GM10248 (cell line): ENCODE measurements at regions of chr10 and their contacts with region 1.

Region 1: DNA sequence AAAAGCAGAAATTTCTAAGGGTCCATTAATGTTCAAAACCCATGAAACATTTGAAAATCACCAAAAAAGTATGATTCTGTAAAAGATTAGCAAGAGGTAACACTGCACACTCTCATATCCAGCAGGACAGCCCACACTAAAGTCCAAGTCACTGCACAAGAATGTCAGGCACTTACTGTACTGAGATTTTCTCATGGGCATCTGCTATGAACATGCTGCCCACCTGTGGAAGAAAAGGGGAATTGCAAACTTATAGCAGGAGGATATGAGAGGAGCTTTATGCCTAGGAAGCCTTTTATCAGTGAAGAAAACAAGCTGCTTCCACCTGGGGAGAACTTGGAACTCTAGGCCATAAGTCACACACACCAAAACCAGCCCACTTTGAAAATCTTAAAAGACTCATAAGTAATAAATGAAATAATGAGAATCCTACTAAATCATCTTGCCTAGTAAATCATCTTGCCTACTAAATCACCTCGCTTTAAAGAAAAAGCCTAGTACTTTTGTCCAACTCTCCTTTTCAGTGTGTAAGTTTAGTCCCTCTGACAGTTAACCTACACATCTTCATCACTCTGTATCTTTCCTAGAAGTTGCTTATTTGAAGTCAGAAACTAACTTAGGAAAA is 46.1 kb downstream of the ARMH3 start:
- DNase-seq: peak; percentile 72
- CTCF ChIP-seq: peak; percentile 94

Region 2: DNA sequence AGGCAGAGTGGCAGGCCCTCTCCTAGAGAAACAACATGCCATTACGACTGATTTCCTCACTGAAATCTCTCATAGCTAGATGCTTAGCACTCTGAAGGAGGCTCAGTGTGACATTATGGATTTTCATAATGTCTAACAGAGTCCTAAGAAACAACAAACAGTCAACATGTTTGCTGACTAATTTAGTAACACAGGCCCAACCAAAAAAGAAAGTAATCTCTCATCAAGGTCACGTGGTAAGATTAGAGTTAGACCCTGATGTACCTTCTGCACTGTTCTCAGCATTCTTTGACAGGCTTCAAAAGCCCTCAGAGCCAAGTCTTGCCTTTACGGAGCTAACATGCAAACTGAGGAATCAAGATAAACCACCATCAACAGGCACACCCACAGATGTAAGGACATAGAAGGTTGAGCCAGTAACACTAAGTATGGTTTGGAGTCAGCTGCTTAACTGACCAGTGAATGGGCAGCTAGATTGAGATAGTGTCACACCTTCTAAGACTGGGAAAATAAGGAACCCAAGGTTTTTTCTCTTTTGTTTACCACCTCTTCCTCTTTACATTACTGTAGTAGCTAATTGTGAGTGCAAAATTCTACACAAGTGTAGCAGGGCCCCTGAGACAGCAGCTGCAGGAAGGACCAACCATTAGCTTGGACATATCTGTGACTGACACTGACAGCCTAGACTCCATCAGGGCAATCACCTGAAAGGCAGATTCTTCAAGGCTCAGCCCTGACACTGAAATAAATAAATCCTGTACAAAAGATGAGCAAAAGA is 151.0 kb before region 1 on chr10:
- CTCF ChIA-PET with region 1: interaction called, 52 read pairs
- POLR2A ChIA-PET with region 1: no interaction called
- DNase-seq: peak; percentile 60
- CTCF ChIP-seq: no peak

Region 3: GRCh38 chr10:101903827-101904550 is 105.9 kb before region 1 on chr10:
- CTCF ChIA-PET with region 1: interaction called, 249 read pairs
- POLR2A ChIA-PET with region 1: no interaction called
- DNase-seq: peak; percentile 67
- CTCF ChIP-seq: no peak

Region 4: GRCh38 chr10:101959349-101959916 is 50.5 kb before region 1 on chr10:
- CTCF ChIA-PET with region 1: interaction called, 15 read pairs
- POLR2A ChIA-PET with region 1: no interaction called
- DNase-seq: no peak
- CTCF ChIP-seq: no peak

Region 5: DNA sequence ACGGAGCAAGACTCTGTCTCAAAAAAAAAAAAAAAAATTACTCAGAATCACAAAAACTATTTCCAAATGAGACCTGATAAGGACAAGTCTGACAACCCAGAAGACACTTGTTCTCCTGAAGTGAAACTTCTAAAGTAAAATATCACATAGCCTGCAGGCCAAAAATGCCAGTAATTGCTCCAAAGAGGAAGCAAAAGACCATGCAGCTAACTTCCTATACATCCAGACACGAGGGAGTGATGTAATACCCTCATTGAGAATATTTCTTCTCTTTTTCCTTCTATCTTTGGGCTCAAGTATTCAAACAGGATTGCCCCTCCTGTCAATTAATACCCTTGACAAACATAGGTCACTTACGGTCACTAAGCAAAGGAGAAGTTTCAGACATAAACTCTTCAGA is 14.9 kb after region 1 on chr10:
- CTCF ChIA-PET with region 1: interaction called, 70 read pairs
- POLR2A ChIA-PET with region 1: no interaction called
- DNase-seq: no peak
- CTCF ChIP-seq: no peak